Caco-2 (cell line): ENCODE measurements at regions of chr19 and their contacts with region 1.

Region 1: DNA sequence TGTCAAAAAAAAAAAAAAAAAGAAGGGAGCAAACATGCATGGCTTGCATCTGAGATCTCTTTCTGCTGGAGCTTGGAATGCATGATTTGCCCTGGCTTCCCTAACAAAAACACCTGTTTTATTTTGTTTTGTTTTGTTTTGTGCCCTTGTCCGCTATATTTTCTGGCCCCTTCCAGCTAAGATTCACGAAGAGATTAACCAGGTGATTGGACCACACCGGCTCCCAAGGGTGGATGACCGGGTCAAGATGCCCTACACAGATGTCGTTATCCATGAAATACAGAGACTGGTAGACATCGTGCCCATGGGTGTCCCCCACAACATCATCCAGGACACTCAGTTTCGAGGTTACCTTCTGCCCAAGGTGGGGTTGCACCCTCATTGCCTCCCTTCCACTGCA is 15.9 kb upstream of the CYP2A7 start:
- DNase-seq: no peak
- H3K4me3 ChIP-seq: no peak overlapping the region
- H3K4me3 Mint-ChIP-seq: no peak overlapping the region
- H3K27ac Mint-ChIP-seq: peak overlapping the region; percentile 95
- H3K4me1 ChIP-seq: peaks cover 18% of the 10 kb centered on the region
- H3K4me1 Mint-ChIP-seq: peaks cover 29% of the 10 kb centered on the region
- H3K27me3 ChIP-seq: no peaks in the 10 kb centered on the region
- H3K27me3 Mint-ChIP-seq: no peaks in the 10 kb centered on the region
- CTCF ChIP-seq: no peak

Region 2: GRCh38 chr19:39967561-39967960 is 930.4 kb before region 1 on chr19:
- CTCF ChIA-PET with region 1: no interaction called
- POLR2A ChIA-PET with region 1: no interaction called
- intact Hi-C with region 1: no loop called
- DNase-seq: no peak
- H3K4me3 ChIP-seq: no peak overlapping the region
- H3K4me3 Mint-ChIP-seq: no peak overlapping the region
- H3K27ac Mint-ChIP-seq: no peak overlapping the region
- H3K4me1 ChIP-seq: peaks cover 6% of the 10 kb centered on the region; the same call in 1 of the 2 replicates
- H3K4me1 Mint-ChIP-seq: peaks cover 25% of the 10 kb centered on the region
- H3K27me3 ChIP-seq: no peaks in the 10 kb centered on the region
- H3K27me3 Mint-ChIP-seq: no peaks in the 10 kb centered on the region
- CTCF ChIP-seq: no peak

Region 3: GRCh38 chr19:40822161-40822560 is 75.8 kb before region 1 on chr19:
- CTCF ChIA-PET with region 1: no interaction called
- POLR2A ChIA-PET with region 1: no interaction called
- intact Hi-C with region 1: loop called (anchors 1 kb)
- DNase-seq: peak in 1 of 2 experiments; percentile 26
- H3K4me3 ChIP-seq: no peak overlapping the region
- H3K4me3 Mint-ChIP-seq: peak overlapping the region; percentile 23
- H3K27ac Mint-ChIP-seq: peak overlapping the region; percentile 98
- H3K4me1 ChIP-seq: peaks cover 35% of the 10 kb centered on the region
- H3K4me1 Mint-ChIP-seq: peaks cover 40% of the 10 kb centered on the region
- H3K27me3 ChIP-seq: no peaks in the 10 kb centered on the region
- H3K27me3 Mint-ChIP-seq: no peaks in the 10 kb centered on the region
- CTCF ChIP-seq: no peak

Region 4: DNA sequence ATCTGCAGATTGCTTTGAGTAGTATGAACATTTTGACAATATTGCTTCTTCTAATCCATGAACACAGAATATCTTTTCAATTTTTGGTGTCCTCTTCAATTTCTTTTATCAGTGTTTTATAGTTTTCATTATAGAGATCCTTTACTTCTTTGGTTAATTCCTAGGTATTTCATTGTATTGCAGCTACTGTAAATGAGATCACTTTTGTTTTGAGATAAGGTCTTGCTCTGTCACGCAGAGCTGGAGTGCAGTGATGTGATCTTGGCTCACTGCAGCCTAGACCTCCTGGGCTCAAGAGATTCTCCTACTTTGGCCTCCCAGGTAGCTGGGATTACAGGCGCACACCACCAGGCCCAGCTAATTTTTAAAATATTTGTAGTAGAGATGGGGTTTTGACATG is 25.8 kb before region 1 on chr19:
- CTCF ChIA-PET with region 1: no interaction called
- POLR2A ChIA-PET with region 1: no interaction called
- intact Hi-C with region 1: no loop called
- DNase-seq: no peak
- H3K4me3 ChIP-seq: no peak overlapping the region
- H3K4me3 Mint-ChIP-seq: no peak overlapping the region
- H3K27ac Mint-ChIP-seq: no peak overlapping the region
- H3K4me1 ChIP-seq: no peaks in the 10 kb centered on the region
- H3K4me1 Mint-ChIP-seq: no peaks in the 10 kb centered on the region
- H3K27me3 ChIP-seq: no peaks in the 10 kb centered on the region
- H3K27me3 Mint-ChIP-seq: no peaks in the 10 kb centered on the region
- CTCF ChIP-seq: no peak

Region 5: GRCh38 chr19:40928850-40929249 is 30.9 kb after region 1 on chr19:
- CTCF ChIA-PET with region 1: no interaction called
- POLR2A ChIA-PET with region 1: no interaction called
- intact Hi-C with region 1: loop called (anchors 2 kb)
- DNase-seq: peak; percentile 68 to 74
- H3K4me3 ChIP-seq: no peak overlapping the region
- H3K4me3 Mint-ChIP-seq: peak overlapping the region; percentile 38
- H3K27ac Mint-ChIP-seq: peak overlapping the region; percentile 90
- H3K4me1 ChIP-seq: peaks cover 41% of the 10 kb centered on the region
- H3K4me1 Mint-ChIP-seq: peaks cover 31% of the 10 kb centered on the region
- H3K27me3 ChIP-seq: no peaks in the 10 kb centered on the region
- H3K27me3 Mint-ChIP-seq: no peaks in the 10 kb centered on the region
- CTCF ChIP-seq: no peak

Region 6: GRCh38 chr19:40954573-40954972 is 56.6 kb after region 1 on chr19:
- CTCF ChIA-PET with region 1: no interaction called
- POLR2A ChIA-PET with region 1: no interaction called
- intact Hi-C with region 1: no loop called
- DNase-seq: peak in 1 of 2 experiments; percentile 63
- H3K4me3 ChIP-seq: no peak overlapping the region
- H3K4me3 Mint-ChIP-seq: no peak overlapping the region
- H3K27ac Mint-ChIP-seq: no peak overlapping the region
- H3K4me1 ChIP-seq: no peaks in the 10 kb centered on the region
- H3K4me1 Mint-ChIP-seq: no peaks in the 10 kb centered on the region
- H3K27me3 ChIP-seq: no peaks in the 10 kb centered on the region; the same call in 1 of the 2 replicates
- H3K27me3 Mint-ChIP-seq: no peaks in the 10 kb centered on the region
- CTCF ChIP-seq: no peak